Activated B cell treated with CpG ODN at 0.5 μM for 24 hours (primary cell): ENCODE measurements at regions of chr21 and their contacts with region 1.

Region 1: DNA sequence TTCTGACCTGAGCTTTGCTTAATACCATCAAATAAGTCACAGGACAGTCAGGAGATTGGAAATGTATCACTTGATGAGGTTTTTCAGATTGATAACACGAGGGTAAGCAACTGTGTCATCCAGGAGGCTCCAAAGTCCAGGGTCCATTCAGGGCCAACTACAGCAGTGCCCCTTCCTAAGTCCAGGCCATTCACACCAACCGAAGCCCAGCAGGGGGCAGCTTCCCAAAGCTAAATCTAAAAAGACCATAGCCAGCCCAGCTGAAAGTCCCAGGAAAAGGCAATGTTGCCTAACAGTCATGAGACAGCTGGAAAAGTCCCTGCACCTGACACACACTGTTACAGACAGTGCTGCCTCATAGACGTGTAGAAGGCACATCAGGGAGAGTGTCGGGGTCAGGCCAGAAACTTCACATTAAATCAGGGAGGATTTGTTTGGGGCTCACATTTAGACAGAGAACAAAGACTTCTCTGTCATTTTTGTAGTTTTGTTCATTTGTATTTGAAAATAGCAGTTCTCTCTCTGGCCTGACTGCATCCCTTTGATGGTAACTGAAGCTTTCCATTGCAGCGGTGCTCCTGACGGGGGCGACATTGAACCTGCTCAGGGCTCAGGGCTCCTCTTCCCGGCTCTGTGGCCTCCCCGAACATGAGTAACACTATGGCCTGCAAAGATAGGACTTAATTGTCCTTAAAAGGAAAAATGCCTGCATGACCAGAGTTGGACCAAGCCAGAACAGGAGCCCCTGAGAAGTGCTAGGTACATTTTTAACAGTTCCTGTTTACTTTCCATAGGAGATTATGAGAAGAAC is 200.4 kb downstream of the NRIP1 start:
- DNase-seq: no peak
- ATAC-seq: peak; percentile 64
- H3K4me3 Mint-ChIP-seq: no peak overlapping the region
- H3K27ac Mint-ChIP-seq: no peak overlapping the region
- H3K4me1 Mint-ChIP-seq: peaks cover 49% of the 10 kb centered on the region
- H3K27me3 Mint-ChIP-seq: no peaks in the 10 kb centered on the region
- CTCF ChIP-seq: no peak

Region 2: DNA sequence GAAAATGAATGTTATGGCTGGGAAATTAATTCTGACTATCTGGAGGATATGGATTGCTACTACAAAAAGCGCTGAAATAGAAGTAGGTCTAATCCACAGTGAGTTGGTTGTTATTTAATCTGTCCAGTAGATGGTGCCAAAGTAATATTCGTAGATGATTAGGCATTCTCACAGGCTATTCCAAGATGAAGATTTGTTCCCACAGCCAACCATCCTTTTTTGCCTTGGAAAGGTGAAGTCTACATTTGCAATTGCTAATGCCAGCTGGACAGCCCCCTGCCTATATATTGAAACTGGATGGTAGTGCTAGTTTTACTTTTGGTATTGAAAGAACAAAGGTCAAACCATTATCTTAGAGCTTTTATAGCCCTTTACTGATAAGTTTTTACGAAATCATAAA is 604.7 kb before region 1 on chr21:
- CTCF ChIA-PET with region 1: interaction called, 3 read pairs
- POLR2A ChIA-PET with region 1: no interaction called
- intact Hi-C with region 1: loop called (anchors 2 kb)
- DNase-seq: no peak
- ATAC-seq: no peak
- H3K4me3 Mint-ChIP-seq: no peak overlapping the region
- H3K27ac Mint-ChIP-seq: no peak overlapping the region
- H3K4me1 Mint-ChIP-seq: no peaks in the 10 kb centered on the region
- H3K27me3 Mint-ChIP-seq: peaks cover 2% of the 10 kb centered on the region
- CTCF ChIP-seq: no peak

Region 3: GRCh38 chr21:14306151-14306907 is 558.1 kb before region 1 on chr21:
- CTCF ChIA-PET with region 1: no interaction called
- POLR2A ChIA-PET with region 1: no interaction called
- intact Hi-C with region 1: loop called (anchors 5 kb)
- DNase-seq: no peak
- ATAC-seq: no peak
- H3K4me3 Mint-ChIP-seq: no peak overlapping the region
- H3K27ac Mint-ChIP-seq: no peak overlapping the region
- H3K4me1 Mint-ChIP-seq: peaks cover 4% of the 10 kb centered on the region
- H3K27me3 Mint-ChIP-seq: peaks cover 2% of the 10 kb centered on the region
- CTCF ChIP-seq: no peak

Region 4: GRCh38 chr21:14403681-14404318 is 460.6 kb before region 1 on chr21:
- CTCF ChIA-PET with region 1: interaction called, 5 read pairs
- POLR2A ChIA-PET with region 1: no interaction called
- intact Hi-C with region 1: loop called (anchors 1 kb)
- DNase-seq: no peak
- ATAC-seq: peak; percentile 57
- H3K4me3 Mint-ChIP-seq: no peak overlapping the region
- H3K27ac Mint-ChIP-seq: no peak overlapping the region
- H3K4me1 Mint-ChIP-seq: no peaks in the 10 kb centered on the region
- H3K27me3 Mint-ChIP-seq: no peaks in the 10 kb centered on the region
- CTCF ChIP-seq: peak; percentile 77

Region 5: GRCh38 chr21:14591882-14592281 is 272.5 kb before region 1 on chr21:
- CTCF ChIA-PET with region 1: no interaction called
- POLR2A ChIA-PET with region 1: no interaction called
- intact Hi-C with region 1: no loop called
- DNase-seq: no peak
- ATAC-seq: no peak
- H3K4me3 Mint-ChIP-seq: no peak overlapping the region
- H3K27ac Mint-ChIP-seq: peak overlapping the region; percentile 65
- H3K4me1 Mint-ChIP-seq: peaks cover 25% of the 10 kb centered on the region
- H3K27me3 Mint-ChIP-seq: no peaks in the 10 kb centered on the region
- CTCF ChIP-seq: no peak

Region 6: DNA sequence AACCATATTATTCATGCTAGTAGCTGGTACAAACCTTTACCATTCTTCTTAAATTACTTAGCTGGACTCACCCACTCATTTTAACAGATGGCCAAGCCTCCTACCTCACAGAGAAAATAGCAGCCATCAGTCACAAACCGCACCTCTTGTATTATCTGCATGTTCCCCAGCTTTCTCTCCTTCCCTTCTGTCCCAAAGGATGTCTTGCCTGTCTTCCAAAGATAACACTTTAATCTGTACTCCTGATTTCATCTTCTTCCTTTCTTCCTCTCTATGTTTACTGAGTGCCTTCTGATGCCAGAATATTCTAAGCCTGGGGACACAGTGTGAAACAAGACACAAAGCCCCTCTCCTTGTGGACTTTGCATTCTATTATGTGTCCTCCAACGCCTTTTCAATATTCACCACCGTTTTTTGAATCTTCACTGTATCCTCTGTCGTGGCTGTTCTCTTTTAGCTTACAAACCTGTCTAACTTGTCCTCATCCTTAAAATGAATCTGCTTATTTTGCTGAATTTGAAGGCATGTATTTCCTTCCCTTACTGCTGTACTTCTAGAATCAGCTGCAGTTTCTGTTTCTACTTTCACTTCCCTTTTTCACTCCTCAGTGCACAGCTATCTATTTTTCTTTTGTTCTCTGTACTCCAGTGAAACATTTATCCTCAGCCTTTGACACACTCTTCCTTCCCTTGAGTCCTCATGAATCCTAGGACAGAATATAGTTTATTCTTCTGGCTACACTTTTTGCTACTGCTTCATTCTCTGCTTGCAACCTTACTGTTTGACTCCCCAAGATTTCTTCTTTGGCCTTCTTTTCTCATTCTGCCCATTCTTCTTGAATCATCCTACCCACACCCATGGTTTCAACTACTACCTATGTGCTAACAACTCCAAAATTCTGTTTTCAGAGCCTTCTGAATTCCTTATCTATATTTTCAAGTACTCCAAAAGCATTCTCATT is 101.4 kb before region 1 on chr21:
- CTCF ChIA-PET with region 1: no interaction called
- POLR2A ChIA-PET with region 1: no interaction called
- intact Hi-C with region 1: loop called (anchors 5 kb)
- DNase-seq: no peak
- ATAC-seq: peak; percentile 95
- H3K4me3 Mint-ChIP-seq: no peak overlapping the region
- H3K27ac Mint-ChIP-seq: no peak overlapping the region
- H3K4me1 Mint-ChIP-seq: peaks cover 33% of the 10 kb centered on the region
- H3K27me3 Mint-ChIP-seq: no peaks in the 10 kb centered on the region
- CTCF ChIP-seq: no peak

Region 7: DNA sequence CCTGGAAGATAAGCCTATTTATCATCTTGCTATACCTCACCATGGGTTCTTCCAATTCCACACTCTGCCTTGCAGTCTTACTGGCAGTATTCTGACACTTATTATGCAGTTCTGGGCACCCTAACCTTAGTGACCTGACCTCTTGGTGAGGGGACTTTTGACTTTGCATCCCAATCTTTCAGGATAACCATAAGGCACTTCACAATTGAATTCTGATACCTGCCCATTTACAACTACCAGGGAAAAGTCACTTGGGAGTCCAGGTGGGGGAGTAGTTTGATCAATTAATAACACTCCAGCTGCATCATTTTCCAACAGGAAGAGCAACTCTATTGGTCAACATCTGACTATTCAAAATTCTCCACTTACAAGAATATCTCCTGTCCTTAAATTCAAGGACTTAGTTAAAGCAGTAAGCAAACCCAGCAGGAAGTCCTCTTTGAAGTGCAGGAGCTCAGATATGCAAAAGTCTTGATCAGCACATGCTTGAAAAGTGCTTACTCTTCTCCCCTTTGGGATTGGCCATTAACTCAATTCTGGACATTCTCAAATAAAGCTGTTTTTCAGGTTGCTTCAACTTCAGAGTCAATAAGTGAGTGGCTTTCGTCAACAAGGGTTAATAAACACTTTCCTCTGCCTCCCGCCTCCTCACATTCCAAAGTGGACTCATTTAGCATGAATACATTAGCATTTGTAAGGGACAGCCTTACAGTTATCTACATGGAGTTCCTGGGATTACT is 377.8 kb after region 1 on chr21:
- CTCF ChIA-PET with region 1: no interaction called
- POLR2A ChIA-PET with region 1: no interaction called
- intact Hi-C with region 1: no loop called
- DNase-seq: no peak
- ATAC-seq: no peak
- H3K4me3 Mint-ChIP-seq: no peak overlapping the region
- H3K27ac Mint-ChIP-seq: no peak overlapping the region
- H3K4me1 Mint-ChIP-seq: no peaks in the 10 kb centered on the region
- H3K27me3 Mint-ChIP-seq: peaks cover 2% of the 10 kb centered on the region
- CTCF ChIP-seq: no peak

Region 8: DNA sequence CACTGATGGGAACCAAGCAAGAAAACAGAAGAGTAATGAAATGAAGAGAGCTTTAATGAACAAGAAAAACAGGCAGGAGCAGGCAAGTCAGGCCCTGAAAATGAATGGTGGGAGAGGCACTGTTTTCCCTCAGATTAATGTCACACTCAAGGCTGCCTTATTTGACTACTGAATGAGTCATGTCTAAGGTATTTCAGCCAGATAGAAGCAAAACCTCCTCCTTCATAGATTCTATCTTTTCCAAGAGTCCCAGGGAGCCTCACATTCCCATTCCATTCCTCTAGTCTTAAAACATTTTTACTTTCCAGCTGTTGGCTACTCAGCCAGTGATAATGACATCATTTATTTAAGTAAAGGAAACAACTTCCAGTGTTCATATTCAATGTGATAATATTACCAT is 428.8 kb after region 1 on chr21:
- CTCF ChIA-PET with region 1: no interaction called
- POLR2A ChIA-PET with region 1: no interaction called
- intact Hi-C with region 1: loop called (anchors 10 kb)
- DNase-seq: no peak
- ATAC-seq: no peak
- H3K4me3 Mint-ChIP-seq: no peak overlapping the region
- H3K27ac Mint-ChIP-seq: no peak overlapping the region
- H3K4me1 Mint-ChIP-seq: peaks cover 10% of the 10 kb centered on the region
- H3K27me3 Mint-ChIP-seq: no peaks in the 10 kb centered on the region
- CTCF ChIP-seq: no peak